G401 (cell line): ENCODE measurements at regions of chr3 and their contacts with region 1.

Region 1: DNA sequence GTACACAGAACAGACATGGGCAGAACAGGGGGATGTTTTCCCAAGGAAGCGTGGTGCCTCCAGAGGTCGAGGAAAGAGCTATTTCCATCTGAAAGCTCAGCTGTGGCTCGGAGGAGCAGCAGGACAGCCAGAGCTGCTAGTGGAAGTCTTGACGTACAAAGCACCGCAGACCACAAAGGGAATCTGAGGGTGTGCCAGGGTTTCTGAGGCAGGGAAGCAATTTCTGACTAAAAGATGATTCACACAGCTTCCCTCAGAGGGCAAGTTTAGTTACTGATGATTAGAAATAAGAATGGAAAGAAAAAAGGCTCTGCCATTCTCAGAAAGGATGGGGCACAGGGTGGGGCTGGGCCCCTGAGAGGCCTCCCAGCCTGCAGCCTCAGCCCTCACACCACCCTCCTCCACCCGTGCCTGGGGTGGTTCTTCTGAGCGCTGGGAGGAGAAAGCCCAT is 45.8 kb upstream of the SEC13 start:
- DNase-seq: no peak

Region 2: DNA sequence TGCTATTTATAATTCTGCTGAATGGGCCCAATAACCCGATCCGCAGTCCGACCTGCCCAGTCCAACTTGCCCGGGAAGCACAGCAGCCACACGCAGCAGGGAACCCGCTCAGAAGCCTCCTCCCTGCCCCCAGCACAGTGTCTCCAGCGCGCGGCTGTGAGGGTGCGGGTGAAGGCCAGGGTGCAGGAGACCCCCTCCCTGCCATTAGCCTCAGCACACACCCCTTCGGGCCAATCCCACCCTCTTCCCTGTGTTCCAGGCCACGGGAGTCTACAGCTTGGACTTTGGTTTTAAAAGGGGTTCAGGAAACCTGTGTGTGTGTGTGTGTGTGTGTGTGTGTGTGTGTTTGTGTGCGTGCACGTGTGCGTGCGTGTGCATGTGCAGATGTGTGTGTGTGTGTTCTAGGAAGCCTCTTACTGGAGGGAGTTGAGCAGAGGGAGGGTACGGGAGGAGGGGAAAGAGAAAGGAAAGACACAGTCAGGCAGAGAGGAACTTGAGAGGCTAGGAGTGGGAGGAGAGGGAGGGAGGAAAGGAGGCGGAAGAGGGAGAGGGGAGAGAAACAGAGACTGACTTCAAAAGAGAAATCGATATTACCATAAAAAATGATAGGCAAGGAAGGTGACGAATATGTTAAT is 104.5 kb after region 1 on chr3:
- in situ Hi-C with region 1: loop called (anchors 10 kb)
- DNase-seq: no peak